ENCODE measurements at regions of chr20 and their contacts with region 1.

Region 1: DNA sequence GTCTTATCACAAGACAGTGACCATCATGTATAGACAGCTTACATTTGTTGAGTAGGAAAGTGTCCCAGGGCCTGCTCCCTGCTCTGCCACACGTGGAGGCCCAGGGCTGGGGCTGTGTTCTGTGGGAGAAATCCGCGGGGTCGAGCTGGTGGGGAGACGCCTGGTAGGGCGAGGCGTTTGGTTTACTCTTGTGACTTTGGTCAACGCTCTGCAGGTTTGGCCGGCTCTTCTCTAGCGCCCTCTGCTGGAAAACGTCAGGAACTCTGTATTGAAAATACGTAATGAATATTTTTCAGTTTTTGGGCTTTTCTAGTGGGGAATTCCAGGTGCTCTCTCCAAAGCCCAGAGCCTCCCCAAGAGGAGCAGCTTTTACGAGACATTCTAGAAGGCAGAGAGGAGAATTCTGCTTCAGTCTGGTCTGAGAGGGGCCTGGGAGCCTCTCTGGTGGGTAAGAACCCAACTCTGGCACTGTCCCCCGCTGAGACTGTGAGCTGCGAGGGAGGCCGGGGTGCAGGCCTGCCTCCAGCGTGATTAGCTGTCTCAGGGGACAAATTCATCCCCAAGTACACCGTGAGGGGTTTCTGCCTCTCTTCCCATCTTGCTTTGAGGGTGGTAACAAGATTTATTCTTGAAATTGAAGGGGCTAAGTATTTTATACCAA is 112.6 kb upstream of the RALGAPA2 start:
- DNase-seq: peak; percentile 84

Region 2: GRCh38 chr20:20664795-20665589 is 160.1 kb before region 1 on chr20:
- intact Hi-C with region 1: loop called in 1 of 2 experiments (anchors 10 kb)
- DNase-seq: no peak

Region 3: DNA sequence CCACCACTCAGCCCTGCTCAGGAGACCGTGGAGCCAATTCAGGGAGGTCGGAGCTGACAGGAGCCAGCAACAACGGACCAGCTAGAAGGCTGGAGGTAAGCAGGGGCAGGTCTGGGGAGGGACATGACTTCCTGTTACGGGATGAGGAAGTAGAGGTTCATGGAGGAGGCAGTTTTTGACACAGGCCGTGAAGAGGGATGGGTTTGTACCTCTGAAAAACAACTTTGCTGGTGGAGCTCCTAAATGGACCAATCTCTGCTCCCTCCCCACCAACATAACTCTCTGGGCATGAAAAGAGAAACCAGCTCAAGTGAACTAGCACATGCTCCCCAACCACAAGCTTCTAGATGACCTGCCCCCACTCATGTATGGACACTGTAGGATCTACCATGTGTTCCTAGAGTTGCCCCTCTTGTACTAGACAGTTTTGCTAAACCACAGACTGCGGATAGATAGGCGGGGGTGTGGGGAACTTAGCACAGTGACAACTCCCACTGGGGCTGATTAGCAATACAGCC is 144.0 kb before region 1 on chr20:
- intact Hi-C with region 1: loop called in 1 of 2 experiments (anchors 10 kb)
- DNase-seq: no peak

Region 4: GRCh38 chr20:20860078-20860806 is 35.2 kb after region 1 on chr20:
- intact Hi-C with region 1: no loop called
- DNase-seq: peak; percentile 96